Naive thymus-derived CD4-positive, alpha-beta T cell (primary cell): ENCODE measurements at regions of chr12 and their contacts with region 1.

Region 1: GRCh38 chr12:59580050-59580449 is 15.8 kb upstream of the SLC16A7 start:
- DNase-seq: no peak
- ATAC-seq: no peak
- H3K4me3 ChIP-seq: no peak overlapping the region
- H3K4me3 Mint-ChIP-seq: no peak overlapping the region
- H3K27ac ChIP-seq: no peak overlapping the region
- H3K27ac Mint-ChIP-seq: no peak overlapping the region
- H3K4me1 ChIP-seq: peaks cover 18 to 21% of the 10 kb centered on the region in 2 donors
- H3K4me1 Mint-ChIP-seq: peaks cover 34 to 55% (median 49%) of the 10 kb centered on the region in 7 donors
- H3K27me3 ChIP-seq: no peaks in the 10 kb centered on the region
- H3K27me3 Mint-ChIP-seq: no peaks in the 10 kb centered on the region

Region 2: GRCh38 chr12:57935839-57936512 is 1644.1 kb before region 1 on chr12:
- CTCF ChIA-PET with region 1: no interaction called
- POLR2A ChIA-PET with region 1: no interaction called
- intact Hi-C with region 1: loop called in 1 of 2 experiments (anchors 5 kb)
- DNase-seq: peak; percentile 65 to 95 (median 92)
- ATAC-seq: peak; percentile 96
- H3K4me3 ChIP-seq: peak overlapping the region; percentile 71
- H3K4me3 Mint-ChIP-seq: peak overlapping the region; percentile 84 to 99 (median 98)
- H3K27ac ChIP-seq: peak overlapping the region; percentile 98
- H3K27ac Mint-ChIP-seq: peak overlapping the region; percentile 98 to 100 (median 99)
- H3K4me1 ChIP-seq: peaks cover 21 to 23% of the 10 kb centered on the region in 2 donors
- H3K4me1 Mint-ChIP-seq: peaks cover 21 to 47% (median 34%) of the 10 kb centered on the region in 7 donors
- H3K27me3 ChIP-seq: no peaks in the 10 kb centered on the region
- H3K27me3 Mint-ChIP-seq: peaks cover 0 to 2% (median 0%) of the 10 kb centered on the region in 5 donors

Region 3: DNA sequence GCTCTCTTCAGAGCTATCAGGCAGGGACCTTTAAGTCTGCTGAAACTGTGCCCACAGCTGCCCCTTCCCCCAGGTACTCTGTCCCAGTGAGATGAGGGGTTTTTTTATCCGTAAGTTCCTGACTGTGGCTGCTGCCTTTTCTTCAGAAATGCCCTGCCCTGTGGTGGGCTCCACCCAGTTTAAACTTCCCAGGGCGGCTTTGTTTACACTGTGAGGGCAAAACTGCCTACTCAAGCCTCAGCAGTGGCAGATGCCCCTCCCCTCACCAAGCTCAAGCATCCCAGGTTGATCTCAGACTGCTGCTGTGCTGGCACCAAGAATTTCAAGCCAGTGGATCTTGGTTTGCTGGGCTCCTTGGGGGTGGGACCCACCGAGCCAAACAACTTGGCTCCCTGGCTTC is 31.1 kb before region 1 on chr12:
- CTCF ChIA-PET with region 1: no interaction called
- POLR2A ChIA-PET with region 1: no interaction called
- intact Hi-C with region 1: loop called in 1 of 2 experiments (anchors 5 kb)
- DNase-seq: peak in 5 of 9 donors; percentile 2 to 32 (median 10)
- ATAC-seq: peak; percentile 46
- H3K4me3 ChIP-seq: no peak overlapping the region
- H3K4me3 Mint-ChIP-seq: peak overlapping the region in 1 of 10 donors; percentile 44
- H3K27ac ChIP-seq: no peak overlapping the region
- H3K27ac Mint-ChIP-seq: no peak overlapping the region
- H3K4me1 ChIP-seq: no peaks in the 10 kb centered on the region
- H3K4me1 Mint-ChIP-seq: peaks cover 0 to 27% (median 23%) of the 10 kb centered on the region in 7 donors
- H3K27me3 ChIP-seq: no peaks in the 10 kb centered on the region
- H3K27me3 Mint-ChIP-seq: peaks cover 0 to 3% (median 0%) of the 10 kb centered on the region in 5 donors